ENCODE measurements at regions of chr15 and their contacts with region 1.

Region 1: GRCh38 chr15:88467073-88467934 is at the starts of genes MRPL46 and MRPS11:
- DNase-seq: peak; percentile 82 to 98 (median 95)

Region 2: GRCh38 chr15:87850916-87851315 is 616.4 kb before region 1 on chr15:
- intact Hi-C with region 1: no loop called
- DNase-seq: no peak

Region 3: GRCh38 chr15:88546248-88547129 is 79.2 kb after region 1 on chr15 and contains the start of gene DET1:
- intact Hi-C with region 1: loop called (anchors 5 kb)
- DNase-seq: peak; percentile 94 to 98 (median 96)

Region 4: DNA sequence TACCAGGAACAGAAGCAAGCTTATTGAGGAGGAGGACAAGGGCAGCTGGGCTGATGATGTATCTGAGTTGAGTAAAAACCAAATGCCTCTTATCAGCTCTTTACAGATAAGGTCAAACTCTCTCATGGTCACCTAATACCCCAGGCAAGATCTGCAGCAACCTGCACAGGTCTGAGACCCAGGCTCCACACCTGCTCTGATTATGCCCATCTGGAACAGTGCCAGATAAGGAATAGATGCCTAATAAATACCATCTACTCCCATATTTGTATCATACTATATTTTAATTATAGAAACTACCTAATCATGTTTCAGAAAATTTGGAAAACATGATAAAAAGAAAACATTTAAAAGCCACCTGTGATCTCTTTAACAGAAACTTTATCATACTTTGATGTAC is 133.2 kb after region 1 on chr15:
- intact Hi-C with region 1: no loop called
- DNase-seq: no peak

Region 5: DNA sequence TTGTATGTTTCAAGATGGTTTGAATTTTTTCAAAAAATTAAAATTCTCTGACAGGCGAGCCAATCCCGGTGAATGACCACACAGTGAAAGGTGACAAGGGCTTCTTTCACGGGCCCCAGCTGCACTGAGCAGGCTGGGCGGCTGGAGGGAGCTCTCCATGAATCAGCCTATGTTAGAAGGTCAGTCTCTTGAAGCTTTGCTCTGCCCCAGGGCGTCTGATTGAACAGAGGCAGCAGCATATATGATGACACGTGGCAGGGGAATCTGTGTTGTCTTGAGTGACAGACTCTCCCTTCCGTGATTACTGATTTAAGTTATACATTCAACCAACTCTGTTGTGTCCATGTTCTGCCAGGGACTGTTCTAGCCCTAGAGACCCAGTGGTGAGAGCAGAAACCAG is 223.0 kb after region 1 on chr15:
- intact Hi-C with region 1: no loop called
- DNase-seq: peak in 37 of 42 donors; percentile 12 to 79 (median 48)

Measured in head of caudate nucleus (tissue), 42 donors.